ENCODE measurements at regions of chr5 and their contacts with region 1.

Region 1: DNA sequence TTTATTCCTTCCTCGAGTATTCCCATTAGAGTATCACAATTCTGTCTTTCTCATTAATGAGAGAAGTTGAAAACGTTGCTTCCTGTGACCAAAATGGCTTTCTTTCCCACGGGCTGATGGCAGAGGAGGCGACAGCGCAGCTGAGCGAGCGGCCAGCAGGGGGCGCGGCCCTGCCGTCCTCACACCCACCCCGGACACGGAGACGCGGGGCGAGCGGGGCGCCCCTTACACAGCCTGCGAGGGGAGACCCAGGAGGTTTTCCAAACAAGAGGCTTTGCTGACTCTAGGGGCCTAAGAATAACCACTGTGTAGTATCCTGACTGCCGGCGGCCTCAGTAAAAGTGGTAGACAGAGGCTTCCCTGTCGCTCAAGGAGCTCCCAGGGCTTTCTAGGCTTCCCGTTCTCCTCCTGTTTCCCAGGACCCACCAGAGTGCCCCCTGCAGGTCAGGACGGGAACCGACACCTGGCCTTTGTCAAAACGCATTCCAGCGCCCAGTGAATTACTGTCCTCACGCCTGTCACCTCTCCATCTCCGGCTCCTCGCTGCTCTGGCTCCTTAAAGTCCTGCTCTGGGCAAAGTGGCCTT is 27.3 kb upstream of the FGF1 start:
- DNase-seq: peak; percentile 93
- ATAC-seq: peak; percentile 98
- H3K4me3 ChIP-seq: peak overlapping the region; percentile 28 to 68 (median 57)
- H3K4me3 Mint-ChIP-seq: peak overlapping the region; percentile 80
- H3K27ac ChIP-seq: no peak overlapping the region
- H3K27ac Mint-ChIP-seq: no peak overlapping the region
- H3K4me1 ChIP-seq: peaks cover 3 to 9% of the 10 kb centered on the region in 2 donors
- H3K4me1 Mint-ChIP-seq: peaks cover 5% of the 10 kb centered on the region
- H3K27me3 ChIP-seq: peaks cover 0 to 15% (median 4%) of the 10 kb centered on the region in 4 experiments
- H3K27me3 Mint-ChIP-seq: peaks cover 18% of the 10 kb centered on the region
- CTCF ChIP-seq: peak; percentile 99

Region 2: GRCh38 chr5:142364251-142365145 is 348.7 kb before region 1 on chr5:
- CTCF ChIA-PET with region 1: no interaction called
- POLR2A ChIA-PET with region 1: no interaction called
- intact Hi-C with region 1: loop called (anchors 5 kb)
- DNase-seq: peak; percentile 27
- ATAC-seq: peak; percentile 34
- H3K4me3 ChIP-seq: no peak overlapping the region
- H3K4me3 Mint-ChIP-seq: peak overlapping the region; percentile 52
- H3K27ac ChIP-seq: no peak overlapping the region
- H3K27ac Mint-ChIP-seq: no peak overlapping the region
- H3K4me1 ChIP-seq: peaks cover 29 to 30% of the 10 kb centered on the region in 2 donors
- H3K4me1 Mint-ChIP-seq: peaks cover 33% of the 10 kb centered on the region
- H3K27me3 ChIP-seq: peaks cover 0 to 27% (median 3%) of the 10 kb centered on the region in 4 experiments
- H3K27me3 Mint-ChIP-seq: peaks cover 15% of the 10 kb centered on the region
- CTCF ChIP-seq: no peak

Region 3: DNA sequence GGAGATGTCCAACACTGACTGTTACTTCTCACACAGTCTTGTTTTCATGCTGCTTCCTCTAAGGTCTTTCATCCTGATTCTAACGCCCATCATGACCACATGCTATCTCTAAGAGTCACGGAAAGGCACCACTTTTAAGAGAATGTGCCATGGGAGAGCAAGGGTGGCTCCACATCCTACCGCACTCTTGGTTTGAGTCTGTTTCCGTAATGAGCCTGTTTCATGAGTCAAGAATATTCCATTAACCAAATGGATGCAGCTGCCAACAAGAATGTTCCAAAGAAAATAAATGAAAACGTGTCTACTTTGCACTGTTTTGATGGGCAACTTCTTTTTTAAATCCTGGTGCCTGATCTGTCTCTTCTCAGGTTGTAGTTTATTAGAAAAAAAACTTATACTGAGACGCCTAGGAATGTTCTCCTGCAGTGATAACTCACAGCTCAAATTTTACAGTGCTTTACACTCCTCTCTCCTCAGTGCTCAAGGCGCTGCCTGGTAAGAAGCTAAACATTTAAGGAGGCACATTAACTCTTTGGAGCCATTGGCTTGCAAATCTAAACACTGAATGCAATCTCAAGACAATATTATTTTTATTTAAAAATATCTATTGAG is 151.6 kb before region 1 on chr5:
- CTCF ChIA-PET with region 1: no interaction called
- POLR2A ChIA-PET with region 1: no interaction called
- intact Hi-C with region 1: no loop called
- DNase-seq: no peak
- ATAC-seq: no peak
- H3K4me3 ChIP-seq: no peak overlapping the region
- H3K4me3 Mint-ChIP-seq: no peak overlapping the region
- H3K27ac ChIP-seq: no peak overlapping the region
- H3K27ac Mint-ChIP-seq: no peak overlapping the region
- H3K4me1 ChIP-seq: no peaks in the 10 kb centered on the region
- H3K4me1 Mint-ChIP-seq: no peaks in the 10 kb centered on the region
- H3K27me3 ChIP-seq: peaks cover 0 to 4% (median 1%) of the 10 kb centered on the region in 4 experiments
- H3K27me3 Mint-ChIP-seq: peaks cover 19% of the 10 kb centered on the region
- CTCF ChIP-seq: no peak

Region 4: GRCh38 chr5:142748568-142749249 is 35.5 kb after region 1 on chr5:
- CTCF ChIA-PET with region 1: interaction called, 30 read pairs
- POLR2A ChIA-PET with region 1: interaction called, 3 read pairs
- intact Hi-C with region 1: no loop called
- DNase-seq: peak; percentile 74
- ATAC-seq: peak; percentile 68
- H3K4me3 ChIP-seq: no peak overlapping the region
- H3K4me3 Mint-ChIP-seq: no peak overlapping the region
- H3K27ac ChIP-seq: no peak overlapping the region
- H3K27ac Mint-ChIP-seq: no peak overlapping the region
- H3K4me1 ChIP-seq: no peaks in the 10 kb centered on the region
- H3K4me1 Mint-ChIP-seq: no peaks in the 10 kb centered on the region
- H3K27me3 ChIP-seq: no peaks in the 10 kb centered on the region
- H3K27me3 Mint-ChIP-seq: peaks cover 13% of the 10 kb centered on the region
- CTCF ChIP-seq: peak; percentile 80

Region 5: DNA sequence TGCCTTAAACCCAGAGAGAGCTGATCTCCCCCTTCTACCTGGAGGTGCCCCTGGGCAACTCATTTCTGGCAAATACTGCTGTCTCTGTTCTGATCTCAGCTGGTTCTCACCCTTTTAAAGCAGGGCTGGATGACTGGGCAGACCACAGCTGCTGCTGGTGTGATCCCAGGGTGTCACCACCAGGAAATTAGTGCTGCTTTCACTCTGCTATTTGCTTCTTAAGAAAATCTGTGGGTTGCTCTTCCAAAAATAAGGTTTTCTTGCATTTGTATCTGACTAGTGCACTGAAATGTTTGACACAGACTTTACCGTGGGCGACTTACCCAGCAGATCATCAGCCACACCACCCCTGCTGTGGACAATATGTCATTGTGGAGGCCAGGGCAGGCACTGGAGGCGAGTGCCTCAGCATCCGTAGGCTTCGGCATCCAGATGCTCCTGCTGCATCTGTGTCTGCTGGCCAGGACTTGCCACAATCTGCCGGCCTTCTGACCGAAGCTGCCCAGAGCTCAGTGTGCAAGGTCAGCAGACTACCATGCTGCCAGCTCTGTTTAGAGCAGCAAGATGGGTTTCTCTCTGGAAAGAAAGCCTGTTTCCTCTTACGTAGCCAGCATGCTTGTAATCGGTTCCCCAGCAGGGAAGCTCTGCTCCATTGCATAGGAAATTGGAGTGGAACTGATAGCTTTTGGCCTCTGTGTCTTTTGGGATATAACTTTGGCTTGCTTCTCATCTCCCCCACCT is 70.6 kb after region 1 on chr5:
- CTCF ChIA-PET with region 1: no interaction called
- POLR2A ChIA-PET with region 1: no interaction called
- intact Hi-C with region 1: no loop called
- DNase-seq: no peak
- ATAC-seq: no peak
- H3K4me3 ChIP-seq: no peak overlapping the region
- H3K4me3 Mint-ChIP-seq: no peak overlapping the region
- H3K27ac ChIP-seq: no peak overlapping the region
- H3K27ac Mint-ChIP-seq: no peak overlapping the region
- H3K4me1 ChIP-seq: peaks cover 0 to 4% of the 10 kb centered on the region in 2 donors
- H3K4me1 Mint-ChIP-seq: peaks cover 20% of the 10 kb centered on the region
- H3K27me3 ChIP-seq: no peaks in the 10 kb centered on the region
- H3K27me3 Mint-ChIP-seq: no peaks in the 10 kb centered on the region
- CTCF ChIP-seq: no peak

Region 6: GRCh38 chr5:142874537-142874936 is 161.3 kb after region 1 on chr5:
- CTCF ChIA-PET with region 1: interaction called, 75 read pairs
- POLR2A ChIA-PET with region 1: no interaction called
- intact Hi-C with region 1: no loop called
- DNase-seq: no peak
- ATAC-seq: no peak
- H3K4me3 ChIP-seq: no peak overlapping the region
- H3K4me3 Mint-ChIP-seq: no peak overlapping the region
- H3K27ac ChIP-seq: no peak overlapping the region
- H3K27ac Mint-ChIP-seq: no peak overlapping the region
- H3K4me1 ChIP-seq: no peaks in the 10 kb centered on the region
- H3K4me1 Mint-ChIP-seq: no peaks in the 10 kb centered on the region
- H3K27me3 ChIP-seq: no peaks in the 10 kb centered on the region
- H3K27me3 Mint-ChIP-seq: no peaks in the 10 kb centered on the region
- CTCF ChIP-seq: no peak

Region 7: GRCh38 chr5:142888469-142889085 is 175.4 kb after region 1 on chr5:
- CTCF ChIA-PET with region 1: interaction called, 75 read pairs
- POLR2A ChIA-PET with region 1: no interaction called
- intact Hi-C with region 1: loop called (anchors 1 kb)
- DNase-seq: peak; percentile 48
- ATAC-seq: peak; percentile 28
- H3K4me3 ChIP-seq: no peak overlapping the region
- H3K4me3 Mint-ChIP-seq: no peak overlapping the region
- H3K27ac ChIP-seq: no peak overlapping the region
- H3K27ac Mint-ChIP-seq: no peak overlapping the region
- H3K4me1 ChIP-seq: no peaks in the 10 kb centered on the region
- H3K4me1 Mint-ChIP-seq: no peaks in the 10 kb centered on the region
- H3K27me3 ChIP-seq: no peaks in the 10 kb centered on the region
- H3K27me3 Mint-ChIP-seq: no peaks in the 10 kb centered on the region
- CTCF ChIP-seq: peak; percentile 84

Measured in B cell (primary cell).